Posterior cingulate gyrus (tissue), 11 donors: ENCODE measurements at regions of chr7 and their contacts with region 1.

Region 1: DNA sequence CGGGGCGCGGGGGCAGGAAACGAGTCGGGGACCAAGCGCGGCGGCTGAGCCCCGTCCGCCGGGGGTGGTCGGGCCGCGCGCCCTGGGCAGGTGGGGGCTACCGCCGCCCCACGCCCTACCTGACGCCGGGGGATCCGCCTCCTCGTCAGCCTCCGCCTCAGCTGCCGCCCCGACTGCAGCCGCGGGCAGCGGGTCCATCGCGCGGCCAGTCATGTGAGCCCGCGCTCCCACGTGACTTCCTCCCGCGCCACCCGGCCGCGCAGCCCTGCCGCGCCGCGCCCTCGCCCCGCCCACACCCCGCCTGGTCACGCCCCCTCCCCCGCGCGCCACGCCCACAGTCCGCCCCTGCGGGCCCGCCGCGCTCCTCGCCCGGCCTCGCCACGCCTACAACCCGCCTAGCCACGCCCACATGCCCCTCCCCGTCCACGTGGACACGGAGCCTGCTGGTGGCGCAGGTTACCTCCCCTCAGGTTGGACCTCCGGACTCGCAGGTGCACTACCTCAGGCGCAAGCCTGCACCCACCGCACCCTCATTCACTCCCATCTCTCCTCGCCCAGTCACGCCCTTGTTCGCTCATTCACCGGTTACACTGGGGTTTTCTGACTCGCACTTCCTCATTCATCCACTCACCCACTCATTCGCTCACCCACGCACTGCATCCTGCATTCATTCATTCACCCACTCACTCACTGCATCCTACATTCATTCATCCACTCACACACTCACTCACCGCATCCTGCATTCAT is at the start of gene SNX8:
- DNase-seq: peak; percentile 82 to 99 (median 92)

Region 2: DNA sequence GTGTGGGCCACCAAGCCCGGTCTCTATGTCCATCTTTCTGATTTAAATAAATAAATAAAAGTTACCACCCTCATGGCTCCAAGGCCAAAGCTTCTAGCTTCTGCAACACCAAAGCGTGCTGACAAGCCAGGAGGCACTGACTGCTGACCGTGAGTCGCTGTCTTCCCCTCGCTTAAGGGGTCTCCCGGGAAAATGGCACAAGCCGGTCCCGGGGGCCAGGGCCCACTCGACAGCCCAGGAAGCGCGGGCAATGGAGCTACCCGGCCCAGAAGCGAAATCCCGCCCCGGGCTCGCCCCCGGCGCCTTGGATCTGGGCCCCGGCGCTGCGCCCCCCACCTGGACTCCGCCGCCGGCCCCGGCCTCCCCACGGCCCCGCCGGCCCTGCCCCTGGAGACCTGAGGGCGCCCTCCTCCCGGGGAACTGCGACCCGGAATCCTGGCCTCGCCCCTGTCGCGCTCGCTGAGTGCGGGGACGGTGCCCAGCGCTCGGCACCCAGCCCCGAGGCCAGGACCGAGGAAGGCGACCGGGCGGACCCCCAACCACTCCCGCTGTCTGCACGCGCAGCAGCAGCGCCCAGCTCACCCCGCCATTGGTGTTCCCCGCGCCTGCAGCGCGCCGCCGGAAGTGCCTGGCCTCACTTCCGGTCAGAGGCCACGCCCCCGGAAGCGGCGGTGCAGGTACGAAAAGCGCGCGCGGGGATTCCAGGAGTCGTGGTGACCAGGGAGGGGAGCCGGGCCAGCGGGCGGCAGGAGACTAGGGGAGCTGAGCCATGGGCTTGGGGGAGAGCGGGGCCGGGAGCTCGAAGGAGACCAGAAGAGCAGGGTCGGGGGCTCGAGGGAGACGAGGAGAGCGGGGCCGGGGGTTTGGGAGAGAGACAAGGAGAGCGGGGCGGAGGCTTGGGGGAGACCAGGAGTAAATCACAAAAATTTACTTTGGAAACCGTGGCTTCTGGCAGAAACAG is 72.5 kb before region 1 on chr7 and contains the starts of genes MRM2 and NUDT1:
- intact Hi-C with region 1: loop called (anchors 5 kb)
- DNase-seq: peak; percentile 68 to 97 (median 85)